ENCODE measurements at regions of chr6 and their contacts with region 1.

Region 1: DNA sequence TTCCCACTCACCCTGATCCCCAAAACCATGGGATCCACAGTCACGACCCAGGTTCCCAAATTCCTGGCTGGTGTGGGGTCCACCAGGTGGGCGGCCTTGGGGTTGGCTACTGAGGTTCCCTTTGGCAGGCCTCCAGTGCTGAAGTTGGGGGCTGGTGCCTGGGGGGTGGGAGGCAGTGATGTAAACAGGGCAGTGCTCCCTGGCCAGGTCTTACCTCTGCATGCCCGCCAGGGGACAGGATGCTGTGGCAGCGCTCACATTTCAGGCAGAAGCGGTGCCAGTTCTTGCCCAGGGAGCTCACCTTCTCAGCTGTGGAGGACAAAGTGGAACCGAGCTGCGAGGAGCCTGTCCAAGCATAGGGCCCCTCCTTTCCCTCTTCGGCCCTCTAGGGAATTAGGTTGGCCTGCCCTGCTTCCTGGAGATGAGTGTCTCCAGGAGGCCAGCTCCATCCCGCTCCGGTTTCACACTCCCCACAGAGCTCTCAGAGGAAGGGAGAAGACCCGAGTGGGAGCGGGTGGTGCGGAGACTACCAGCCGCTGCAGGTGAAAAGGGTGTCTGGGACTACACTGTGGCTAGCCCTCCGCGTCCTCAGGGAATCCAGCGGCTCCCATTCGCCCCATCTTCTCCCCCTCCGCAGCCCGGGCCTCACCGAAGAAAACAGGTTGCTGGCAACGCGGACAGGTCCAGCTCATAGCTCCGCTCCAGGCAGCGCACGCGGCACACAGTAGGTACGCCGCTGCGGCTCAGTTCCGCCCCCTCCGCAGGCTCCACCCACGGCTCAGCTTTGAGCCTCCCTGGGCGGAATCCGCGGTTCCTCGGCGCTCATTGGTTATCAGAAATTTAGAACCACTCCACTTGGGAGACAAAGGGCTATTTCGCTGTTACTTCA is at the start of gene CRIP3:
- DNase-seq: no peak
- ATAC-seq: peak; percentile 92
- H3K4me3 ChIP-seq: peak within 1 kb of the TSS; percentile 57; the same call in 1 of the 2 replicates
- H3K27ac ChIP-seq: no peak within 1 kb of the TSS
- H3K4me1 ChIP-seq: peaks cover 8% of the 10 kb centered on the region
- H3K27me3 ChIP-seq: no peaks in the 10 kb centered on the region
- CTCF ChIP-seq: peak; percentile 49 to 79 (median 50)
- EP300 ChIP-seq: no peak
- POLR2A ChIP-seq: no peak
- RAD21 ChIP-seq: 0 out of 2 replicates have a peak, but pooled peaks have one; percentile 8
- polyA plus RNA-seq, gene CRIP3: 1.7 to 2.3 TPM

Region 2: DNA sequence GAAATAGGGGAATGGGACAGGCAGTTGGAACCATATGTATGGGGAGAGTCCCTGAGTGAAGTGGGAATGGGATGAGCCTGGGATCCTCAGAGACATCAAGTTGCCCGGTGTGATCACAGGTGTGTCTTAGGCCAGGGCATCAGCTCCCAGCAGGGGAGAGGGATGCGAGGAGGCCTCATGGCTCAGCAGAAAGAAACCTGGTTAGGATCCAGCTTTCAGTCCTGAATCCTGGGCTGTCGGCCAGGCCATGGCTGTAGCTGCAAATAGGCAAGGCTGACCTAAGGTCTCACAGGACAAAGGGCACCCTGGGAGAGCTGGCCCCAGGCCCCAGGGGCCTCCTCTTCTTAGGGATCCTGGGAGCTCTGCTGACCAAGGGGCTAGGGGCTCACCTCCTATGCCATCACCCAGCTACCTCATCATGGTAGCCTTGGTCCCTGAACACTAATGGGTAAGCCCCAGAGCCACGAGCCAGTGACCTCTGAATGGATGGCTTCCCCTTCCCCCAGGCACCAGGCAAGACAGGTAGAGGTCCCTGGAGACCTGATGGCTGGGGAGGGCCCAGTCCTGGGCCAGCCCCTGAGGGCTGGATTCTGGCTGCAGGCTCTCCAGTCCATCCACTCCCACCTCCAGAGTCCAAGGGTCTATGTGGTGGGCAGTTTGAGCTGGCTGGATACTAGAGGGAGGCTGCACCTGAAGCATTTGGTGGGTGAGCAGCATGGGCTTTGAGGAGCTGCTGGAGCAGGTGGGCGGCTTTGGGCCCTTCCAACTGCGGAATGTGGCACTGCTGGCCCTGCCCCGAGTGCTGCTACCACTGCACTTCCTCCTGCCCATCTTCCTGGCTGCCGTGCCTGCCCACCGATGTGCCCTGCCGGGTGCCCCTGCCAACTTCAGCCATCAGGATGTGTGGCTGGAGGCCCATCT is 10.4 kb before region 1 on chr6 and contains the start of gene SLC22A7:
- CTCF ChIA-PET with region 1: interaction called, 17 read pairs
- POLR2A ChIA-PET with region 1: interaction called, 3 read pairs
- RAD21 ChIA-PET with region 1: interaction called, 6 read pairs
- SMC1A ChIA-PET with region 1: interaction called, 14 read pairs
- in situ Hi-C with region 1: no loop called
- intact Hi-C with region 1: no loop called
- DNase-seq: no peak
- ATAC-seq: no peak
- H3K4me3 ChIP-seq: no peak within 1 kb of the TSS
- H3K27ac ChIP-seq: no peak within 1 kb of the TSS
- H3K4me1 ChIP-seq: no peaks in the 10 kb centered on the region
- H3K27me3 ChIP-seq: no peaks in the 10 kb centered on the region
- CTCF ChIP-seq: no peak
- EP300 ChIP-seq: no peak
- POLR2A ChIP-seq: peak; percentile 28; the same call in 1 of the 2 replicates
- RAD21 ChIP-seq: no peak
- polyA plus RNA-seq, gene SLC22A7: not detected

Region 3: DNA sequence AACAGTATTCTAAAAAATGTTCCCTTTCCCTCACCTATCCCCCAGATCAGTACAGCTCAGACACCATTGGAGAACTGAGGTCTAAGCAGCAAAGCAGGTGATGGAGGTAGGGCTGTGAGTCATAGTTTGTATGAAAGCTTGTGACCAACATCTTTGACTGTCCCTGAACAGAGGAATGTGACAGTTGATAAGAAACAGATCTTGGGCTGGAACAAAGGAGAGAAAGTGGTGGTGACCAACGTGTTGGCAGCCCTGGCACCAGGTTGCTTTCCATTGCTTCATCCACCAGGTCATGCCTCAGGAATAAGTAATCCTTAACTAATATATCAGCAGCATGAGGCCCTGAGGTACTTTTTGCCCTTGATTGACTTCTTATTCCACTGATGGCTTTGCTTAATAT is 20.2 kb after region 1 on chr6:
- CTCF ChIA-PET with region 1: interaction called, 37 read pairs
- POLR2A ChIA-PET with region 1: interaction called, 3 read pairs
- RAD21 ChIA-PET with region 1: interaction called, 48 read pairs
- SMC1A ChIA-PET with region 1: interaction called, 70 read pairs
- in situ Hi-C with region 1: no loop called
- intact Hi-C with region 1: no loop called
- DNase-seq: no peak
- ATAC-seq: no peak
- H3K4me3 ChIP-seq: no peak overlapping the region
- H3K27ac ChIP-seq: no peak overlapping the region
- H3K4me1 ChIP-seq: no peaks in the 10 kb centered on the region
- H3K27me3 ChIP-seq: no peaks in the 10 kb centered on the region
- CTCF ChIP-seq: no peak
- EP300 ChIP-seq: no peak
- POLR2A ChIP-seq: no peak
- RAD21 ChIP-seq: no peak

Region 4: GRCh38 chr6:43391440-43392031 is 83.2 kb after region 1 on chr6:
- CTCF ChIA-PET with region 1: interaction called, 28 read pairs
- POLR2A ChIA-PET with region 1: interaction called, 5 read pairs
- RAD21 ChIA-PET with region 1: interaction called, 8 read pairs
- SMC1A ChIA-PET with region 1: interaction called, 8 read pairs
- in situ Hi-C with region 1: no loop called
- intact Hi-C with region 1: no loop called
- DNase-seq: no peak
- ATAC-seq: peak; percentile 5
- H3K4me3 ChIP-seq: peak overlapping the region; percentile 52
- H3K27ac ChIP-seq: peak overlapping the region; percentile 59
- H3K4me1 ChIP-seq: peaks cover 6% of the 10 kb centered on the region; the same call in 1 of the 2 replicates
- H3K27me3 ChIP-seq: no peaks in the 10 kb centered on the region
- CTCF ChIP-seq: no peak
- EP300 ChIP-seq: no peak
- POLR2A ChIP-seq: no peak
- RAD21 ChIP-seq: no peak

Region 5: DNA sequence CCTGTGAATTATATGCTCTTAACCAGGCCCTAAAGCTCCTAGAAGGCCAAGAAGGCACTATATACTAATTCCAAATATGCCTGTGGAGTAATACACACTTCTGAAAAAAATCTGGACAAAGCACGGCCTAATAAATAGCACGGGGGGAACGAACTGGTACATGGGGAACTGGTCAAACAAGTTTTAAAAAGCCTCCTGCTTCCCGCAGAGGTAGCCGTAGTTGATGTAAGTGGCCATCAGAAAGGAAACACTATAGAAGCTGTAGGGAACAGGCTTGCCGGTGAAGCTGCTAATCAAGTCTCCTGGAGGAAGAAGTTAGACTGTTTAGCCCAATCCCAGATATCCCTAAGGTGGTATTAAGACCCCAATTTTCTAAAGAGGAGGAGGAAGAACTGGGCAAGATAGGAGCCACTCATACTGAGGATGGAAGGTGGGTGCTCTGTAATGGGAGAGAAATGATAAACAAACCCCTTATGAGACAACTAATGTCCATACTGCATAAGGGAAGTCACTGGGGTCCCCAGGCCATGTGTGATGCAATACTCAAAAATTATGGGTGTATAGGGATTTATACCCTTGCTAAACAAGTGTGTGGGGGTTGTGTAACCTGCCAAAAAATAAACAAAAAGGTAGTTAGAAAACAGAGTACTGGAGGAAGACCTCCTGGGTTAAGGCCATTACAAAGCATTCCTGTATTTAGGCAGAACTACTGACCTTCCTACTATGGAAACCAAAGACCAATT is 88.2 kb after region 1 on chr6:
- CTCF ChIA-PET with region 1: interaction called, 28 read pairs
- POLR2A ChIA-PET with region 1: interaction called, 5 read pairs
- RAD21 ChIA-PET with region 1: interaction called, 19 read pairs
- SMC1A ChIA-PET with region 1: interaction called, 18 read pairs
- in situ Hi-C with region 1: no loop called
- intact Hi-C with region 1: no loop called
- DNase-seq: no peak
- ATAC-seq: no peak
- H3K4me3 ChIP-seq: no peak overlapping the region
- H3K27ac ChIP-seq: no peak overlapping the region
- H3K4me1 ChIP-seq: peaks cover 6% of the 10 kb centered on the region; the same call in 1 of the 2 replicates
- H3K27me3 ChIP-seq: no peaks in the 10 kb centered on the region
- CTCF ChIP-seq: no peak
- EP300 ChIP-seq: no peak
- POLR2A ChIP-seq: no peak
- RAD21 ChIP-seq: no peak

Measured in GM12878 (cell line).